ENCODE measurements at regions of chr4 and their contacts with region 1.

Region 1: DNA sequence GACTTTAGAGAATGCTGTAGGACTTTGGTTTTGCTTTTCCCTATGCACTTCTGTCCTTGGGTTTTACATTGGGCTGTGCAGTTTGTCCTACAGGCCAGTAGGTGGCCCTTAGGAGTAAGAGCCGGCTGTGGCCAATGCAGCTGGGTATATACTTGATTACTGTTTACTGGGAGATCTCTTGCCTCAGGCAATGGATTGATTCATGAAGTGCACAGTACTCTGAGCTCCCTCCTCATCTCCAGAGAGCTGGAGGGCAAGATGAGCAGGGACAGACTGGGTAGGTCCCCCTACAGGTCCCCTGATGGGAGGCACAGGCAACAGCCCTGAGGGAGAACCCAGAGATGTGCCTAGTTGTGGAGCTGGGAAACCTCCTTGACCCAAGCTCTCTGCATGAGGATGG is 103.8 kb upstream of the QRFPR start:
- DNase-seq: peak; percentile 33
- ATAC-seq: peak; percentile 61
- H3K4me3 Mint-ChIP-seq: no peak overlapping the region
- H3K27ac Mint-ChIP-seq: no peak overlapping the region
- H3K4me1 Mint-ChIP-seq: no peaks in the 10 kb centered on the region
- H3K27me3 Mint-ChIP-seq: peaks cover 15% of the 10 kb centered on the region
- CTCF ChIP-seq: peak; percentile 69

Region 2: DNA sequence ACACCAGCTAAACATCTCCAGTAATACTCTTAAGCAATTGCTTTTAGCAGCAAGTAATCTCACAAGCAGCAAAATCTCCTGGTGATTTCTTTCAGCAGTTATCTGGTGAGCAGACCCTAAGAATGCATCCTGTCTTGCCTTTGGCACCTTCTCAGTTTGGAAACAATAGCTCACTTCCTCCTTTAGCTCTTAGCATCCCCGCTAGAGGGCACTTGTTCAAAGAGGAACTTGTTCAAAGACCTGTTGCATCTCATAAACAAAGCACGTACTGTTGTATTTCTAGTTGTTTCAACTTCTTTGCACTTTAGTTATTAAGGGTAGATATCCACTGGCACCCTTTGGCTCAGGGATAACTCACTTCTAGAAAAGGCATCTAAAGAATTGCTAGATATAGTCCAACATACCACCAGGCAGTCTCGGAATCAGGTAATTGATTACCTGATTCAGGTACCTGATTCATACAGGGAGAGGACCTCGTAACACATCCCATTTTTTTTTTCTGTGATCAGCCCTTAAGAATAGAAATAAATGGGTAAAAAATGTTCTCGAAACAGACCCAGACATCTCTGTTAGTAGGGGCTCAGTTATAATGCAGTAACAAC is 21.9 kb before region 1 on chr4:
- CTCF ChIA-PET with region 1: interaction called, 10 read pairs
- POLR2A ChIA-PET with region 1: no interaction called
- intact Hi-C with region 1: no loop called
- DNase-seq: peak; percentile 64
- ATAC-seq: peak; percentile 79
- H3K4me3 Mint-ChIP-seq: no peak overlapping the region
- H3K27ac Mint-ChIP-seq: no peak overlapping the region
- H3K4me1 Mint-ChIP-seq: no peaks in the 10 kb centered on the region
- H3K27me3 Mint-ChIP-seq: peaks cover 22% of the 10 kb centered on the region
- CTCF ChIP-seq: peak; percentile 68

Region 3: GRCh38 chr4:121656269-121656641 is 171.6 kb after region 1 on chr4:
- CTCF ChIA-PET with region 1: interaction called, 6 read pairs
- POLR2A ChIA-PET with region 1: no interaction called
- intact Hi-C with region 1: loop called (anchors 10 kb)
- DNase-seq: peak; percentile 58
- ATAC-seq: peak; percentile 56
- H3K4me3 Mint-ChIP-seq: no peak overlapping the region
- H3K27ac Mint-ChIP-seq: no peak overlapping the region
- H3K4me1 Mint-ChIP-seq: no peaks in the 10 kb centered on the region
- H3K27me3 Mint-ChIP-seq: peaks cover 6% of the 10 kb centered on the region
- CTCF ChIP-seq: no peak

Region 4: DNA sequence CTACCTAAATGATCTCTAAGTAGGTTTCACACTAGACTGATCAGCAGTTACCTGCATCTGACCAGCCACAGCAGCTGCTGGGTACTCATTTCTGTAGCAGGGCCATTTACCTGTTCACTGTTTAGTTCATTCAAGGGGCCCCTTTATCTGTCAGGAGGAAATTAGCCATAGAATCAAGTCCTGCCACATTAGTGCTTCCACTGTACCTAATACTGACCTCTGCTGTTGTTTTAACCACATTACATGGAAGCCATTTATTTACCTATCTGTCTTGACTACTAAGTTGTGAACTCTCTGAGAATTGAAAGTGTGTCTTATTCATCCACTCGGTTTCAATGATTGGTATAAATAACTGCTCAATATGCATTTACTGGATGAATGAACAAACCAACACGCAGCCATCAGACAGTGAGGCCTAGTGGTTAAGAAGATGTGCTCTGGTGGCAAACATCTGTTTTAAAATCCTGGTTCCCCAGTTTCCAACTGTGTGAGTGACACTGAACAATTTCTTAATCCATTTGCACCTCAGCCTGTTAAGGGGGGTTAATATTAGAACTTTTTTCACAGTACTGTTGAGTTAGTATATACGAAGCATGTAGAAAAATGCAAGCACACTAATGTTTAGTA is 242.1 kb after region 1 on chr4:
- CTCF ChIA-PET with region 1: no interaction called
- POLR2A ChIA-PET with region 1: no interaction called
- intact Hi-C with region 1: loop called (anchors 5 kb)
- DNase-seq: peak; percentile 27
- ATAC-seq: peak; percentile 96
- H3K4me3 Mint-ChIP-seq: no peak overlapping the region
- H3K27ac Mint-ChIP-seq: no peak overlapping the region
- H3K4me1 Mint-ChIP-seq: peaks cover 3% of the 10 kb centered on the region
- H3K27me3 Mint-ChIP-seq: peaks cover 4% of the 10 kb centered on the region
- CTCF ChIP-seq: peak; percentile 82

Measured in activated CD8-positive, alpha-beta T cell treated with anti-CD3 and anti-CD28 coated beads for 36 hours (primary cell).